Right ventricle myocardium inferior (tissue), 1 donor: ENCODE measurements at regions of chr18 and their contacts with region 1.

Region 1: DNA sequence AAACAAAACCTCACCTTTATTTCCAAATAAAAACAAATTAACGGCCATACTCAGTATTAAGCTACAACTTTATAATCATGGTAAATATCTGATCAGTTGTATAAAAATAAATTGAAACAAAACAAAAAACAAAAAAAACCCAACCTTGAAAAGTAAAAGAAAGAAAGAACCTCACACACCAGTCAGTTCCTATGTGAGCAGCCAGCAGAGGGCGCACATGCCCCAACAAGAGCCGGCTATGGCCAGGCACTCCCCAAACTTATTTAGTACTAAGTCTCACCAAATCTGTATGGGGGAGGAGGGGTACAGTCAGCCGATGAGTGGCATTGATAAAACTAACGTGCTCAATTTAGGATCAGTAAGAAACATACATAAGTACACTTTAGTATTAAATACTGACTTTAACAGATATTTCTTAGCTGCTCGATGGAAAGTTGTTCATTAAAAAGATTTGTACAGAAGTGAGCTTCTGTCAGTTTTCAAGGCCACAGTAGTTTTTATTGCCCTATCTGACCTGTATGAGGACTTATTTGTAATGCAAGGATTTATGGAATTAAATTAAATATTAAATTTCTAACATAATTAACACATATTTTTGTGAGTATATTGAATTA is 172.6 kb downstream of the TCF4 start:
- DNase-seq: peak; percentile 92
- ATAC-seq: peak; percentile 90

Region 2: GRCh38 chr18:54444319-54444914 is 970.9 kb before region 1 on chr18:
- intact Hi-C with region 1: no loop called
- DNase-seq: no peak
- ATAC-seq: no peak

Region 3: GRCh38 chr18:55096261-55096951 is 319.0 kb before region 1 on chr18:
- intact Hi-C with region 1: loop called (anchors 10 kb)
- DNase-seq: no peak
- ATAC-seq: peak; percentile 77

Region 4: DNA sequence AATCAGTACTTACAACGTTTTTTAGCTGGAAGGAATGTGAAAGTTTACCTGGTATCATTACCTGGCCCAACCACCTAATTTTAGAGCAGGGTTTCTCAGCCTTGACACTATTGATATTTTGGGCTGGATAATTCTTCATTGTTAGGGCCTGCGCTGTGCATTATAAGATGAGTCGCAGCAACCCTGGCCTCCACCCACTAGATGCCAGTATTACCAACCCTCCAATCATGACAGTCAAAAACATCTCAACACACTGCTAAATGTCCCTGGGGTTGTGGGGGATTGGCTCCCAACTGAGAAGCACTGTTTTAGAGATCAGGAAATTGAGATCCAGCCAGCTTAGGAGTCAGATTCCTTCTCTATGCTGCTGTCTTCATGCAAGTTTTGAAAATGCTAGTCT is 437.9 kb after region 1 on chr18:
- intact Hi-C with region 1: loop called (anchors 5 kb)
- DNase-seq: no peak
- ATAC-seq: no peak

Region 5: DNA sequence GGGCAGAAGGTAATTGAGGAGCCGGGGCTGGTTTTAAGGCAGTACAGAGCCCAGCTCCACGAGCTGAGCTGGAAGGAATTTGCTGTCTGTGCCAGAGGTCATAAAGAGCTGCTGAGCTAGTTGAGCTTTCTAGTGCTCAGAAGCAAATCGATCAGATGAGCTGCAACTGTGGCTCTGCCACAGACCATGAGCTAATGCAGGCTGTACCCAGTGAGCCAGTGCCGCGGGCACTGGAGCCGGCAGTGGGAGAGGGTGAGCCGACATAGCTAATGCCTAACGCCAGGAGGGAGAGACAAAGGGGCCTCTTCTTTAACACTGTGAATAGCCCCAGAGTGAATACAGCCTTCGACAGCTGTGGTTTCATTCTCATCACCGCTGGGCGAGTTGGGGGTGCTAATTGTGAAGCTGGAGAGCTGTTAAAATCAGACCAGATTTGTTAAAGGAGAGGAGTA is 582.7 kb after region 1 on chr18:
- intact Hi-C with region 1: loop called (anchors 10 kb)
- DNase-seq: no peak
- ATAC-seq: peak; percentile 53